Dorsolateral prefrontal cortex (tissue), 120 donors: ENCODE measurements at regions of chr6 and their contacts with region 1.

Region 1: GRCh38 chr6:154675602-154676088 is 57.6 kb upstream of the SCAF8 start:
- DNase-seq: peak; percentile 73 to 97 (median 85)
- H3K4me3 ChIP-seq: no peak overlapping the region
- H3K27ac ChIP-seq: no peak overlapping the region
- H3K27me3 ChIP-seq: no peaks in the 10 kb centered on the region
- CTCF ChIP-seq: peak in 55 of 56 donors; percentile 98 to 100 (median 100)

Region 2: DNA sequence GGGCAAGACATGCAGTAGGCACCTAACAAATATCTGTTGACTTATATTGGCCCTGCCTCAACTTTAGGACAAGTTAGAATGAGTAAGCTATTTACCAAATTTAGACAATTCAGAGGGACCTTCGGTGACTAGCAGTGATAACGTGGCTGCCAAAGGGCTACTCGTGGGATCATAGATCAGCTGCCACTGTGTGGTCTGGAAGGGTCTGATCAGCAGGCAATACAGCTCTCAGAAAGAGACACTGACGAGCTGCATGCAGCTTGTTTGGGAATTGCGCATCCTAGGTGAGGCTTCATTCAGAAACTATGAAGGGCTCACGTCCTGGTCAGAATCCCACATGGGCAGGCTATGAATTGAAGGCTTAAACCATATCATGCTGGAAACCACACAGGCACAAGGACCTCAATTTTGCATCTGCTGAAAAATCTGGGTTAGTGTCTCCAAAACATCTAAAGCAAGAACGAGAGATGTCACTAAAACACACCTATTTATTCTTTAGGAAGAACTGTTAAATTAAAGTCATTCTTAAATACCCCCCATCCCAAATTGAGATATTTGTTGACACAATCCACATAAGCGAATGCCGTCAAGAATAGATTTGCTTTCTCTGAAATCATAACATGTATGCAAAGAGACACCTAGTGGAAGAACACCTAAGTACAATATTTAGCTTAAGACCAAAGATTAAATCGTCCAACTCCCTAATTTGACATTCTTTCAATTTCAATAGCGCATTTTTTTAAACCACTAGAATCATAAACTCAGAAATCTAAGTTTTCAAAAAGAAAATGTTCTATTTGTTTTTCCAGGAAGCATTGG is 398.6 kb before region 1 on chr6:
- intact Hi-C with region 1: no loop called
- DNase-seq: no peak
- H3K4me3 ChIP-seq: peak overlapping the region in 40 of 59 donors; percentile 0 to 47 (median 28)
- H3K27ac ChIP-seq: peak overlapping the region in 1 of 59 donors; percentile 12
- H3K27me3 ChIP-seq: no peaks in the 10 kb centered on the region
- CTCF ChIP-seq: peak; percentile 44 to 84 (median 68)

Region 3: GRCh38 chr6:154500769-154501577 is 174.7 kb before region 1 on chr6:
- intact Hi-C with region 1: loop called (anchors 2 to 10 kb)
- DNase-seq: peak in 1 of 10 donors; percentile 41
- H3K4me3 ChIP-seq: peak overlapping the region in 23 of 59 donors; percentile 1 to 40 (median 16)
- H3K27ac ChIP-seq: peak overlapping the region; percentile 52 to 98 (median 93)
- H3K27me3 ChIP-seq: no peaks in the 10 kb centered on the region
- CTCF ChIP-seq: peak; percentile 40 to 88 (median 70)

Region 4: GRCh38 chr6:154733012-154733625 is 57.5 kb after region 1 on chr6 and contains the start of gene SCAF8:
- intact Hi-C with region 1: loop called (anchors 5 kb)
- DNase-seq: peak; percentile 46 to 90 (median 68)
- H3K4me3 ChIP-seq: peak within 1 kb of the TSS; percentile 55 to 100 (median 92)
- H3K27ac ChIP-seq: peak within 1 kb of the TSS; percentile 95 to 100 (median 100)
- H3K27me3 ChIP-seq: no peaks in the 10 kb centered on the region
- CTCF ChIP-seq: peak; percentile 49 to 97 (median 75)
- total RNA-seq, gene SCAF8: 46.7 to 79.8 (median 61.4) TPM

Region 5: DNA sequence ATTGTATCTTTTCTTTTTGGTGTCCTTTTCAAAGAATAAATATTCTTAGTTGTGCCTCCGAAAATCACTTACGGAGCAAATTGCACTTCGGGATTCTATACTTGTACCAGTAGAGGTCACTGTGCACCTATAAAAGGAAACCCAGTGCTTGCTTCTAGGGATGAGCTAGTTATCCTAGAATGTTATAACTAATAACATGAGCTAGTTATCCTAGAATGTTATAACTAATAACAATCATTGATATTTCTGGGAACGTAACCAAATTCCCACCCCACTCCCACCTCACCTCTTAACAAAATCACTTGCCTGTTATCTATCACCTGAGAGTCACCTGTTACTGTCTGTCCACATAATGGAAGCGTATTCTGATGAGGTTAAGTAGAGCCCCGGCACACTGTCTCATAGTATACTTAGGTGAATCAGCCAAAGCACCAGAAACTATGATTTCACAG is 192.5 kb after region 1 on chr6:
- intact Hi-C with region 1: loop called in 1 of 2 experiments (anchors 5 kb)
- DNase-seq: no peak
- H3K4me3 ChIP-seq: no peak overlapping the region
- H3K27ac ChIP-seq: no peak overlapping the region
- H3K27me3 ChIP-seq: no peaks in the 10 kb centered on the region
- CTCF ChIP-seq: peak; percentile 59 to 88 (median 76)

Region 6: DNA sequence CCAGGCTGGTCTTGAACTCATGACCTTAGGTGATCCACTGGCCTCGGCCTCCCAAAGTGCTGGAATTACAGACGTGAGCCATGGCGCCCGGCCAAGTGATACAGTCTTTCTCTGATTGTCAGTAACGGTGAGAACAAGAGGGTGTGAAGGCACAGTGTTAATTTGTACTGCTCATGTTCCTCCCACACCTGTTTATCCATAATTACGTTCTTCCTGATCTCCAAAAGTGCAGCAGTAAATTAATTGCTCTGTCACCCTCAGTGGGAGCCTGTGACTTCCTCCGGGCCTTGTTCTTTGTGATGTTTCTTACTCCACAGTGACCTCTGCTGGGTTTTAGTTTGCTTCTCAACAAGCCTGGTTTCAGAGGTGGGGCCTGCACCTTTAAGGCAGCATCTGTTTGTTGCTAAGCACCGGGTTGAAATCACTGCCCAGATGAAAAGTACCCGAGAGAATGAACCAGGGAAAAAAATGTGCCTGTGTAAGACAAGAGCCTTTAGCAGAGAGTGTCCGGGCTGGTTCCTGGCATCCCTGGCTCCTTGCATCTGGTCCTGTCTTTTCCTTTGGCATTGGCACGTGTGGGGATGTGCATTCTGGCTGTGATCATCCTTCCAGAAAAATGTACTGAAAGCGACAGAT is 499.0 kb after region 1 on chr6:
- intact Hi-C with region 1: loop called (anchors 10 kb)
- DNase-seq: peak in 9 of 10 donors; percentile 49 to 77 (median 56)
- H3K4me3 ChIP-seq: peak overlapping the region in 1 of 59 donors; percentile 8
- H3K27ac ChIP-seq: peak overlapping the region in 27 of 59 donors; percentile 2 to 64 (median 31)
- H3K27me3 ChIP-seq: no peaks in the 10 kb centered on the region
- CTCF ChIP-seq: peak in 55 of 56 donors; percentile 26 to 88 (median 75)